PC-3 (cell line): ENCODE measurements at regions of chr17 and their contacts with region 1.

Region 1: GRCh38 chr17:63434876-63435684 is 11.0 kb downstream of the CYB561 start:
- DNase-seq: peak; percentile 99
- ATAC-seq: peak; percentile 39
- H3K4me3 ChIP-seq: no peak overlapping the region
- H3K27ac ChIP-seq: peak overlapping the region; percentile 97
- H3K4me1 ChIP-seq: peaks cover 67% of the 10 kb centered on the region
- H3K27me3 ChIP-seq: no peaks in the 10 kb centered on the region
- CTCF ChIP-seq: peak; percentile 45; the same call in 1 of the 2 replicates

Region 2: GRCh38 chr17:63332286-63332685 is 102.8 kb before region 1 on chr17:
- CTCF ChIA-PET with region 1: no interaction called
- POLR2A ChIA-PET with region 1: no interaction called
- intact Hi-C with region 1: no loop called
- DNase-seq: peak; percentile 8
- ATAC-seq: no peak
- H3K4me3 ChIP-seq: no peak overlapping the region
- H3K27ac ChIP-seq: no peak overlapping the region
- H3K4me1 ChIP-seq: peaks cover 19% of the 10 kb centered on the region
- H3K27me3 ChIP-seq: no peaks in the 10 kb centered on the region
- CTCF ChIP-seq: no peak

Region 3: GRCh38 chr17:63369233-63369632 is 65.8 kb before region 1 on chr17:
- CTCF ChIA-PET with region 1: no interaction called
- POLR2A ChIA-PET with region 1: no interaction called
- intact Hi-C with region 1: no loop called
- DNase-seq: no peak
- ATAC-seq: no peak
- H3K4me3 ChIP-seq: no peak overlapping the region
- H3K27ac ChIP-seq: no peak overlapping the region
- H3K4me1 ChIP-seq: no peaks in the 10 kb centered on the region
- H3K27me3 ChIP-seq: no peaks in the 10 kb centered on the region
- CTCF ChIP-seq: no peak

Region 4: GRCh38 chr17:63459952-63460393 is 24.9 kb after region 1 on chr17:
- CTCF ChIA-PET with region 1: no interaction called
- POLR2A ChIA-PET with region 1: interaction called, 4 read pairs
- intact Hi-C with region 1: loop called (anchors 1 kb)
- DNase-seq: no peak
- ATAC-seq: no peak
- H3K4me3 ChIP-seq: no peak overlapping the region
- H3K27ac ChIP-seq: peak overlapping the region; percentile 71; the same call in 1 of the 2 replicates
- H3K4me1 ChIP-seq: peaks cover 26% of the 10 kb centered on the region
- H3K27me3 ChIP-seq: no peaks in the 10 kb centered on the region
- CTCF ChIP-seq: no peak

Region 5: DNA sequence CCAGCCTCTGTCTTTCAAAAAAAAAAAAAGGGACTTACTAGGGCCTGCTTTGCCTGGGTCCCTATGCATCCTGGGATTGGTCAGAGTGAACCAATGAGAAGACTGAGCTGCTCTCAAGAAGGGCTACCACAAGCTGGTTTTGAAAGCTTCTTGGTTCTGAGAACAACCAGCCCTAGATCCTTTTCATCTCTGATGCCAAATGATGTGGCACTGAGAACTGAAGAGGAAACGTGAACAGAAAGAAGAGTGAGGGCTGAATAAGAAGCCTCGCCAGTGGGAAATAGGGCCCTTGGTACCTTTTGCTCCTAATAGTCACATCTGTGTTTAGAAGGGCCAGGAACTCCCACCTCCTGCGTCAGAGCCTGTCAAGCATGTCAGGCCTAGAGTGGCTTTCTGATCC is 176.3 kb after region 1 on chr17:
- CTCF ChIA-PET with region 1: interaction called, 8 read pairs
- POLR2A ChIA-PET with region 1: no interaction called
- intact Hi-C with region 1: loop called (anchors 2 kb)
- DNase-seq: no peak
- ATAC-seq: no peak
- H3K4me3 ChIP-seq: no peak overlapping the region
- H3K27ac ChIP-seq: no peak overlapping the region
- H3K4me1 ChIP-seq: peaks cover 4% of the 10 kb centered on the region
- H3K27me3 ChIP-seq: no peaks in the 10 kb centered on the region
- CTCF ChIP-seq: no peak

Region 6: DNA sequence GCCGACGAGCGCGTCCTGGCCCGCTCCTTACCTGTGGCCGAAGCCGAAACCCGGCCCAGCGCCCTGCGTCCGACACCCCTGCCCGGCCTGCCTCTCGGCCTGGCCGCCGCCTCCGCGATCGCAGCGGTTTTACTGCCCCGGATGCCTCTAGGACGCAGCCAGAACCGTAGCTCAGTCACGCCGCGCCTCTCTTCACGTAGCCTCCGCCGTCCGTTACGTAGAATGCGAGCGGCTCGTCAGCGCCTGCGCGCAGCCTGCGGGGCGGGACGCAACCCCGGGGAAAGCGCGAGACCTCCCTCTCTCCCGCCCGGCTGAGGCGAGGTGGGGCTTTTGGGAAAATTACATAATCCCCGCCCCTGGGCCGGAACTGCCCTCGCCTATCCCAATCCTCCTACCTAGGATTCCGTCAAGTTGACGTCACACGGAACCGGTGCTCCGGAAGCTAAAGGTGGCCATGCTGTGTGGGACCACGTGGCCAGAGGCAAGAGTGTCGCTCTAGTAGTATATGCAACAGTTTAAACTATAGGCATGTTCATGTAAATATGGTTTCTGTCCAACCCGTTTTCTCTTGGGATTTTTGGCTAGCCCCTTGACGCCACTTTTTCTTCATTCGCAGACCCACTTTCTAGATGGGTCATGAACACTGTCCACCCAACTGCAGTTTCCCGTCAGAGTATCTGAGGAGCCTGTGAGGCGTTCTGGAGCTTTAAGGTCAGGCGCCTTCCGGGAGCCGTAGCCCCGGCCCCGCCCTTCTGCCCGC is 338.5 kb after region 1 on chr17 and contains the start of gene CCDC47:
- CTCF ChIA-PET with region 1: no interaction called
- POLR2A ChIA-PET with region 1: no interaction called
- intact Hi-C with region 1: loop called (anchors 10 kb)
- DNase-seq: peak; percentile 100
- ATAC-seq: peak; percentile 87
- H3K4me3 ChIP-seq: peak within 1 kb of the TSS; percentile 88
- H3K27ac ChIP-seq: peak within 1 kb of the TSS; percentile 98
- H3K4me1 ChIP-seq: peaks cover 34% of the 10 kb centered on the region
- H3K27me3 ChIP-seq: no peaks in the 10 kb centered on the region
- CTCF ChIP-seq: no peak
- total RNA-seq, gene CCDC47: 147 and 163 TPM in 2 replicates